PC-9 (cell line): ENCODE measurements at regions of chrX and their contacts with region 1.

Region 1: DNA sequence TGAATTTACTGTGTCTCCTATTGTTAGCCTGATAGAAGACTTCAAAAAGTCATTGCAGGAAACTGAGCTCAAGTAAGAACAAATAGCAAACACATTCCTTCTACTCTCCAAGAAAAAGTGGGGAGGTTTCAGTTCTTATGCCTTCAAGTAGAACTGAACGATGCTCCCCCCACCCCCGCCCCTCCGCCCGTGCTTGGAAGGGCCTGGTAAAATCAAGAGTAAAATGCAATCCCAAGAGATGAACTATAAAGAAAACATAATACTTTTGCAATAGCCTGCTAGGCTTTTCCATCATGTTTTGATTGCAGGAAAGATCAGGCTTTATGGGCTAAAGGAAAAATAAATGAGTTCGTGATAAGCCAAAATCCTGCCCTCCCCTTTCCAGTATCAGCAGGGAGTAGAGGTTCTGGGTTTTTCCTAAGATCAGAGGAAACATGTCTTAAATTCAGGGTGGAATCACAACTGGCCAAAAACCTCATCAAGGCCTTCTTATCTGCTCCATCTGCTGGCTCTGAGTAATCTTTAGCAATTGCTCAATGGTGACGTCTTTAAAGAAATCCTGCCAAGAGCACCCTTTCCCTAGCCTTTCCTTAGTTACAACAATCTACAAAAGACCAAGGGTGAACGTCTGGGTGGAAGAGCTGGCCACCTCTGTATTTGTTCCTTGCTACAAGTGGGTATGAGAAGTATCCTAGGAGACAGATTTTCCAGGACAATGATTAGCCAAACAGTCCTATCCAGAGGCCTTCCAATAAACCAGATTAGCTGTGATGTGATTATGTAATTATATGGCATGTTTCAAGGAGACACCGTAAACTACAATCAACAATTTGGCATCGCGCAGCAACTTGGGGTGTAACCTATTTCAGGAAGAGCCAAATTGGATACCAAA is 66.3 kb upstream of the FAM9C start:
- DNase-seq: peak; percentile 40 to 83
- H3K4me3 ChIP-seq: 0 out of 2 replicates have a peak overlapping the region, but pooled peaks have one; percentile 24
- H3K27ac ChIP-seq: peak overlapping the region; percentile 91
- H3K4me1 ChIP-seq: peaks cover 24% of the 10 kb centered on the region
- H3K27me3 ChIP-seq: no peaks in the 10 kb centered on the region
- CTCF ChIP-seq: no peak

Region 2: DNA sequence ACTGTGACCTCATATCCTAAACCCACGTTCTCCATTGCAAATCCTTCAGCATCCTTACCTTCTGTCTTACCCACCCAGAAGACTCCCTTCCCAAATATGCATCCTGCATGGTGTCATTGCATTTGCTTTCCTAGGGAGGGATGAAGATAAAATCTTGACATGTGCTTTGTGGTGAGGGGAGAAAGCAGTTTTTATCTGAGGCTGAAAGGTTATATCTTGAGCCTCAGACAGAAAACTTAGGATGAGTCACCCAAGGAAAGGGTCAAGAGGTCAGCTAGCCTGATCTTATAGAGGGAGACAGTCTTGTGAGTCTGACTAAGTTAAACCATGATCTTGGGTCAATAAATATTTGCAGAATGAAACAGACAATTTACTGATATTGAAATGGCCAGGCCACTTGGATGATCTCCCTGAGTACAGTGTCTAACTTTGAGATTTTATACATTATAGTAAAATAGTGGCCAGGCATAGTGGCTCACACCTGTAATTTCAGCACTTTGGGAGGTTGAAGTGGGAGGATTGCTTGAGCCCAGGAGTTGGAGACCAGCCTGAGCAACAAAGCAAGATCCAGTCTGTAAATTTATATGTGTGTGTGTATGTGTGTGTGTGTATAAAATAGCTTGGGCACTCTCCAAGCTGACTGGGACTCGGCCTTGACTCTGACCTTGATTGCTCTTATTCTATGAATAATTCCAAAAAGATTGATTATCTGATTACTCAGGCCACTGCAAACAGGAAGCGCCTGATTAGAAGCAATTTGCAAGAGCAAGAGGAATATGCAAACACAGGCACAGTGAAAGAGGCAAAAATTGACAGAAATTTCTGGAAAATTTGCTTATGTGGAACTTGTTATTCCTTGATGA is 50.8 kb before region 1 on chrX:
- CTCF ChIA-PET with region 1: no interaction called
- POLR2A ChIA-PET with region 1: no interaction called
- intact Hi-C with region 1: loop called (anchors 1 kb)
- DNase-seq: peak; percentile 43 to 84
- H3K4me3 ChIP-seq: no peak overlapping the region
- H3K27ac ChIP-seq: peak overlapping the region; percentile 80
- H3K4me1 ChIP-seq: peaks cover 29% of the 10 kb centered on the region
- H3K27me3 ChIP-seq: no peaks in the 10 kb centered on the region
- CTCF ChIP-seq: no peak

Region 3: DNA sequence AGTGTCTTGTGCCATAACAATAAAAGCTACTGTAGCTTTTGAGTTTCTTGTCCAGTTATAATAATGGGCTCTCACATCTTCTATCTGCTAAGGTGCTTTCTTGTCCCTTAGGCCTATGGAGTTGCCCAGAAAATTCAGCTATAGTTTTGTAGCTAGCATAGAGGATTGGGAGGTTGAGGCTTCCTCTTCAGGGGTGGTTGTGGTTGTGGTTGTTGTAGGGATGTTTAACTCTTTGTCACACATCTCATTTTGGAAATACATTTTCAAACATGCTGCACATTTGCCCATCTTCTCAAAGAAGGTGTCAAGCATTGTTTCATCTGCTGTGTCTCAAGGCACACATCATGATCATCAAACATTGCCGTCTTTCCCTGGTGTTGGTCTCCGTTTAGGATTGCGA is 144.2 kb after region 1 on chrX:
- CTCF ChIA-PET with region 1: no interaction called
- POLR2A ChIA-PET with region 1: interaction called, 11 read pairs
- intact Hi-C with region 1: no loop called
- DNase-seq: no peak
- H3K4me3 ChIP-seq: no peak overlapping the region
- H3K27ac ChIP-seq: no peak overlapping the region
- H3K4me1 ChIP-seq: no peaks in the 10 kb centered on the region
- H3K27me3 ChIP-seq: no peaks in the 10 kb centered on the region
- CTCF ChIP-seq: no peak